MCF 10A (cell line): ENCODE measurements at regions of chr10 and their contacts with region 1.

Region 1: GRCh38 chr10:63157845-63158624 is 24.9 kb downstream of the NRBF2 start:
- DNase-seq: peak; percentile 89
- H3K4me3 Mint-ChIP-seq: no peak overlapping the region
- H3K27ac Mint-ChIP-seq: no peak overlapping the region
- H3K4me1 Mint-ChIP-seq: no peaks in the 10 kb centered on the region
- H3K27me3 Mint-ChIP-seq: no peaks in the 10 kb centered on the region
- CTCF ChIP-seq: peak; percentile 67

Region 2: GRCh38 chr10:62268399-62269114 is 889.5 kb before region 1 on chr10 and contains the start of gene RTKN2:
- CTCF ChIA-PET with region 1: interaction called, 12 read pairs
- POLR2A ChIA-PET with region 1: no interaction called
- intact Hi-C with region 1: no loop called
- DNase-seq: peak; percentile 71
- H3K4me3 Mint-ChIP-seq: peak within 1 kb of the TSS; percentile 86
- H3K27ac Mint-ChIP-seq: peak within 1 kb of the TSS; percentile 39
- H3K4me1 Mint-ChIP-seq: peaks cover 21% of the 10 kb centered on the region
- H3K27me3 Mint-ChIP-seq: no peaks in the 10 kb centered on the region
- CTCF ChIP-seq: no peak
- total RNA-seq, gene RTKN2: 1.6 and 2.6 TPM in 2 replicates

Region 3: DNA sequence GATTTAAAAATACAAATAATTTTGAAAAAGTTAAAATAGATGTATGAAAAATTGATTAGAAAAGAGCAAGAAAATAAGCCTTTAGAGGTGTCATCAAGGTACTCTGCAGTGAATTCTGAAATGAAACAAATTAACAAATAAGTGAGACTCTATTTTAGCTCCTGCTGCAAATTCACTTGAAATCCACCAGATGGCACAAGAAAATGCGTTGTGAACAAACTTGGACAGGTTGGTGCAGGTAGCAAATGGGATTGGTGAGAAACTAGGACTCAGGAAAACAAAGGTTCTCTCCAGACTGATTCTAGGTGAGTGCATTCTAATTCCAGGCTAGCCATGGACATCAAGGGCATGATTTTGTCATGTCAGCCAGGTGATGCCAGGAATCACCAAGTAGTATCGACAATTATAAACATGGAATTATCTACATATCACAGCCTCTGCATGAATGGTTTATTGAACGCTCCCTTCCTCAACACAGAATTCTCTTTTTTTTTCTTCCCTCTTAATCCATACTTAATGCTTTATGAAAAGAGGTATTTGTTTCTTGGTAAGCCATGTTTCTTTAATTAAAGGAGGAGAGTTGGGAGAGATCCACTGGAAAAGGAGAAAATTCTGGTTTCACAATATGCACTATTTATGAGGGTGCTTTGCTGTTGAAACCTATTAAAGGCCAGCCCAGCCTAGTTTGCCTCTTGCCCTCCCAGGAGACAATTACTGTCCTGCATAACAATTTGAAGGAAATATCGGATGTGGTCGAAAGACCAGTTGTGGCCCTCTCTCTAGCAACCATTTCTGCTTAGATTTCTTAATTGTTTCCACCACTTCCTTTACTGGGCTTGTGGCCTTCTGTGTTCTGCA is 665.8 kb before region 1 on chr10:
- CTCF ChIA-PET with region 1: interaction called, 6 read pairs
- POLR2A ChIA-PET with region 1: no interaction called
- intact Hi-C with region 1: loop called (anchors 1 kb)
- DNase-seq: peak; percentile 61
- H3K4me3 Mint-ChIP-seq: no peak overlapping the region
- H3K27ac Mint-ChIP-seq: no peak overlapping the region
- H3K4me1 Mint-ChIP-seq: no peaks in the 10 kb centered on the region
- H3K27me3 Mint-ChIP-seq: no peaks in the 10 kb centered on the region
- CTCF ChIP-seq: peak; percentile 48

Region 4: DNA sequence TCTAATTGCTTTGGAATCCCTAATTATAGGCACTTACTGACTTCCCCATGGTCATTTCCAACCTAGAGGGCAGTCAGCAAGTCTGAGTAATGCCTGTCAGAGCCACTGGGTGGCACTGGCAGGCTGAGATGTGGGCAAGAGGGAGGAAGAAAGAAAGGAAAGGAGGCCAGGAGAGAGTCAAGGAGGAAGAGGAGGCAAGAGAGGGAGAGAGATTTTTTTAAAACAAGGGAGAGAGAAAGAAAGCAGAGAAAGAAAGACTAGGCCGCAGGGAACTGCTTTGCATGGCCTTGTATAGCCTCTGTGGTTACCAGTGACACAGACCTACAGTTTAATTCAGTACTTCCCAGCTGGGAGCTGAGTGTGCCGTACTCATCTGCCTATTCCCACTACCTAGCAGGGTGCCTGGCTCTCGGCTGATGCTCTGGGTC is 563.9 kb before region 1 on chr10:
- CTCF ChIA-PET with region 1: interaction called, 105 read pairs
- POLR2A ChIA-PET with region 1: no interaction called
- intact Hi-C with region 1: loop called (anchors 1 kb)
- DNase-seq: peak; percentile 64
- H3K4me3 Mint-ChIP-seq: no peak overlapping the region
- H3K27ac Mint-ChIP-seq: no peak overlapping the region
- H3K4me1 Mint-ChIP-seq: peaks cover 6% of the 10 kb centered on the region
- H3K27me3 Mint-ChIP-seq: no peaks in the 10 kb centered on the region
- CTCF ChIP-seq: peak; percentile 87

Region 5: GRCh38 chr10:62816331-62817120 is 341.5 kb before region 1 on chr10 and contains the start of gene EGR2:
- CTCF ChIA-PET with region 1: interaction called, 10 read pairs
- POLR2A ChIA-PET with region 1: no interaction called
- intact Hi-C with region 1: loop called (anchors 1 kb)
- DNase-seq: peak; percentile 93
- H3K4me3 Mint-ChIP-seq: peak within 1 kb of the TSS; percentile 95
- H3K27ac Mint-ChIP-seq: peak within 1 kb of the TSS; percentile 95
- H3K4me1 Mint-ChIP-seq: peaks cover 24% of the 10 kb centered on the region
- H3K27me3 Mint-ChIP-seq: no peaks in the 10 kb centered on the region
- CTCF ChIP-seq: no peak
- total RNA-seq, gene EGR2: 0.25 and 1.0 TPM in 2 replicates

Region 6: DNA sequence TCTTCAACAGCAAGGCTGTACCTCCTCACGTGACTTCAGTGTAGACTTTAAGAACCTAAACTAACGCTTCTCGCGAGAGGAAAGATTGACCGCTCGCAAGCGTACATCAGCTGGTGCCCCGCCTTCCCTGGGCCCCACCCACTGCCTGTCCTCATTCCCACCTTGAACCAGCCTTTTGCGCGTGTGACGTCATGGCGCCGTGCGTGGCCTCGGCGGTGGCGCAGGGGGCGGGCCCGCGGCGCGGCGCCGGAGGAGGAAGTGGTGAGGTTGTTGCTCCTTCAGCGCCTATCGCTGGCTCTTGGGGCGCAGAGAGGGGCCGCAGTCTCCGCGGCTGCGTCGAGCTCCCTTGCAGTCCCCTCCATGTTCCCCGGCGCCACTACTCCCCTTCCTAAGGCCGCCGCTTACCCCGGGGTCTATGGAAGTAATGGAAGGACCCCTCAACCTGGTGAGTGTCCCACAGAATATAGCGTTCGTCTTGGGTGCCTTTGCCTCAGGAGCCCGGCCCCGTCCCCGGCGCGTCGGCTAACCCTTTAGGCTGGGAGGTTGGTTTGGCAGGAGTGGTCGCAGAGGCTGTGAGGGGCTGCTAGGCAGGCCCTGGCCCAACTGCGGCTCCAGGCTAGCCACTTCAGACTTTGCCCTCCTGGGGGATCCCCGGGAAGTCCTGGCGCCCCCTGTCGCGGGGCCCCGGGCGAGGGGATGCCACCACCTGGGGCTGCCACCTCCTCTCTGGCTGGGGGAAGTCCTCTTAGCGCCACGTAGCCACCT is 24.8 kb before region 1 on chr10 and contains the start of gene NRBF2:
- CTCF ChIA-PET with region 1: interaction called, 14 read pairs
- POLR2A ChIA-PET with region 1: interaction called, 16 read pairs
- intact Hi-C with region 1: no loop called
- DNase-seq: peak; percentile 98
- H3K4me3 Mint-ChIP-seq: peak within 1 kb of the TSS; percentile 86
- H3K27ac Mint-ChIP-seq: peak within 1 kb of the TSS; percentile 86
- H3K4me1 Mint-ChIP-seq: peaks cover 6% of the 10 kb centered on the region
- H3K27me3 Mint-ChIP-seq: no peaks in the 10 kb centered on the region
- CTCF ChIP-seq: peak; percentile 18
- total RNA-seq, gene NRBF2: 44.9 and 56.9 TPM in 2 replicates